HepG2 (cell line): ENCODE measurements at regions of chr14 and their contacts with region 1.

Region 1: DNA sequence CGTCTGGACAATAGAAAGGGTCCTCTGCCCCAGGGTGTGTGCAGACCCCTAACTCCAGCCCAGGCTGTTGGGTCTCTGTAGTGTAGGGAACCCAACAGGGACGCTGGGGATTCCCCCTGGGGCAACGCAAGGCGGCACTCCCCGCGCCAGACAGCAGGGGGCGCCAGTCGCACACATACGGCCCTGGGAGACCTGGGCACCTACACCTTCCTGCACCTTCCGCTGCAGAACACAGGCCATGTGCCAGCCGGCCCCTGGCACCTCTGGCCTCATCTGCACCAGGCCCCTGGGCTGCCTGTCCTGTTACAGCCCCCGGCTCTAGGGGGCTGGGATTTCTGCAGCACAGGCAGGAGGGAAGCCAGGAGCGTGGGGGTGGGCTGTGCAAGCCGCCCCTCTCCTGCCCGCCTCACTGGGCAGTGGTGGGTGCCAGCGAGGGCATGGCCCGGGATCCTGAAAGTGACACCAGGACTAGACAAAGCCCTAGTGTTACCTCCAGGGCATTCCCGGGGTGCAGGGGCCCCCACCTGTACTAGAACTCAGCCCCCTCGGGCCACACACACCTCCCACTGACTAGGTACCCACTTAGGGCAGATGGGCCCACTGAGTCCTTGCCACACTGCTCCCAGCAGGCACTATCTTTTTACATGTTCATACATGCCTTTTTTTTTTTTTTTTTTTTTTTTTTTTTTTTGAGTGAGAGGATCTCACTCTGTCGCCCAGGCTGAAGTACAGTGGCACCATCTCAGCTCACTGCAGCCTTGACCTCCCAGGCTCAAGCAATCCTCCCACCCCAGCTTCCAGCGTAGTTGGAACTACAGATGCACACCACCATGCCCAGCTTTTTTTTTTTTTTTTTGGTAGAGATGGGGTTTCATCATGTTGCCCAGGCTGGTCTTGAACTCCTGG is 37.5 kb downstream of the CCNK start:
- DNase-seq: peak; percentile 40
- ATAC-seq: peak; percentile 61
- H3K4me3 ChIP-seq: no peak overlapping the region
- H3K27ac ChIP-seq: no peak overlapping the region
- H3K4me1 ChIP-seq: peaks cover 15% of the 10 kb centered on the region
- H3K27me3 ChIP-seq: no peaks in the 10 kb centered on the region
- CTCF ChIP-seq: peak; percentile 98
- EP300 ChIP-seq: no peak
- POLR2A ChIP-seq: no peak
- RAD21 ChIP-seq: peak; percentile 97

Region 2: DNA sequence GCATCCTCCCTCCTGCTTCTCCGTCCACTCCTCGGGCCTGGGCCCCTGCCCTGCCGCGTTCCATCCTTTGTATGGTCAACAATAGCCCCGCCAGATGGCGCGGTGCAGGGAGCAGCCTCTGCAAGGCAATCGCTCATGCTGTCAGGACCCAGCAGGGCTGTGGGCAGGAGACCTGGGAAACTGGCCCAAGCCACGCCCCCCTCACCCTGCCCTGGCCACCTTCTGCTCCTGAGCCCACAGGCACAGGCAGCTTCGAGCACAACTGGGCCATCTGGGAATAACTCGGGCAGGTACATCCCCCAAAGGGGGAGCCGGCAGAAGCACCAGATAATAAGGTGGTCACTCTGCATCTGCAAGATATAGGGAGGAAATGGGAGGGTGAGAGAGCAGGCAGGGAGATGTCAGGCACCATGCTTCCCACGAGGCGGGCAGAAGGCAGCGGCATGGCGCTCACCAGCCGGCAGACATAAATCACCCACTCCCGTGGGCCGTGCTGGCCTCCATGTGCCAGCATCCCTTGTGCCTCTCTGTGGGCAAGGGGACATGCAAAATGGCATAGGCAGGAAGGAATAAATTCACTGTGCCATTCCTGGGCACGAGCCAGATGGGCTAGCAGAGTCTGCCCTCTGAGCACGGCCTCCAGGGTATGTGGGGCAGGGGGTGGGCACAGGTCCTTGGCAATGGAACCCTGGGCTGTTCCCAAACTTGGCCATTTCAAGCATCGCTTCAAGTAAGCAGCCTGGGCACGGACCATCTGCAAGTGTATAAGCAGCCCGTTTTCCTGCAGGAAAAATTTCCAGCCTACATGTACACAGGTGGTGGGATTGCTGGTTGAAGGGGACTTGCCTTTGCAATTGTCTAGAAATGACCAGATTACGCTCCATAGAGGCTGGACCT is 44.8 kb after region 1 on chr14:
- CTCF ChIA-PET with region 1: no interaction called
- POLR2A ChIA-PET with region 1: no interaction called
- in situ Hi-C with region 1: no loop called
- intact Hi-C with region 1: loop called (anchors 2 kb)
- DNase-seq: peak; percentile 84
- ATAC-seq: peak; percentile 82
- H3K4me3 ChIP-seq: no peak overlapping the region
- H3K27ac ChIP-seq: peak overlapping the region; percentile 91
- H3K4me1 ChIP-seq: peaks cover 92% of the 10 kb centered on the region
- H3K27me3 ChIP-seq: no peaks in the 10 kb centered on the region
- CTCF ChIP-seq: peak; percentile 94
- EP300 ChIP-seq: no peak
- POLR2A ChIP-seq: no peak
- RAD21 ChIP-seq: peak; percentile 96

Region 3: DNA sequence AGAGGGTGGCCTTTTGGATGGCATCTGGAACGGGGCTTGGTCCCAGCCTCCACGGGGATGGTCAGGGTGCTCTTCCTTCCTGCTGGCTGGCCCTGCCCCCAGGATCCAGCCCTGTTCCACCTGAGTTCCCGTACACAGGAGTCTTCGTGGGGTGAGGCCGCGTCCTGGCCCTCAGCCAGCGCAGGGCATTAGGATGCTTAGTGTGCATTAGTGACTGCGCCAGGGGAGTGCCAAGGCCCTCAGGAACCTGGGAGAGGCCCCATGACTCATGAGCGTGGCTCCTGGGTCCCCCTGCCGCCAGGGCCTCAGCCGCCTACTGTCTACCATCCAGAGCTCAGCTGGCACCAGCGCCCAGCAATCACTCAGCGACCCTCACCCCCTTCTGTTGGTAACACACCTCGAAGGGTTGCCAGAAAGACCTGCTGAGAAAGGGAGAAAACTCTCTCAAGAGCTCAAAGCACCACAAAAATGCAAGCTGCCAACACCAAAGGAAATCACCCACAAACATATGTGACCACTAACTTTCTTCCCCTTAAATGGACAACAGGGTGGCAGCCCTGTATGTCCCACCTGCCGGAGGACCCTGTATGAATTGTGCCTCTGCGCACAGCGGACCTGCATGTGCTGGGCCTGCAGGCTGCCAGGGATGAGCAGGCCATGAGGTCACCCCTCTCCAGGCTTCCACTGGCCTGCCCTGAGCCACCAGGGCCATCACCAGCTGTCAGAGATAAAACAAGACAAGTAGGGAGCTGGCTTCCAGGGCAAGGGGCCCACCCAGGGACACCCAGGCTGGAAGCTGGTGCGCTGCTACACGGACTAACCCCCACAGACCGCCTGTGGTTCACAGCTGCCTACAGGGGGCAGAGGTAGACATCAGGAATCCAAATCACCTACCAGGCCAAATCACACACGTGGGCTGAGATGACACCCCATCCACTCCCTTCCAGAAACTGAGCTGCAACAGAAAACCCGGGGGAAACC is 56.6 kb after region 1 on chr14:
- CTCF ChIA-PET with region 1: no interaction called
- POLR2A ChIA-PET with region 1: no interaction called
- in situ Hi-C with region 1: no loop called
- intact Hi-C with region 1: loop called (anchors 2 kb)
- DNase-seq: peak; percentile 52
- ATAC-seq: peak; percentile 58
- H3K4me3 ChIP-seq: peak overlapping the region in 1 of 3 experiments; percentile 44; a peak in 1 of 6 replicates
- H3K27ac ChIP-seq: peak overlapping the region; percentile 64
- H3K4me1 ChIP-seq: peaks cover 73% of the 10 kb centered on the region
- H3K27me3 ChIP-seq: no peaks in the 10 kb centered on the region; a peak in 1 of 5 replicates
- CTCF ChIP-seq: peak; percentile 61
- EP300 ChIP-seq: no peak
- POLR2A ChIP-seq: no peak
- RAD21 ChIP-seq: 0 out of 2 replicates have a peak, but pooled peaks have one; percentile 25

Region 4: GRCh38 chr14:99628832-99629618 is 110.3 kb after region 1 on chr14:
- CTCF ChIA-PET with region 1: interaction called, 29 read pairs
- POLR2A ChIA-PET with region 1: no interaction called
- in situ Hi-C with region 1: loop called (anchors 5 kb)
- intact Hi-C with region 1: loop called (anchors 1 kb)
- DNase-seq: peak; percentile 18
- ATAC-seq: peak; percentile 89
- H3K4me3 ChIP-seq: no peak overlapping the region
- H3K27ac ChIP-seq: no peak overlapping the region
- H3K4me1 ChIP-seq: peaks cover 5% of the 10 kb centered on the region; the same call in 1 of the 2 replicates
- H3K27me3 ChIP-seq: peaks cover 9 to 37% of the 10 kb centered on the region in 2 experiments; a peak in 4 of 5 replicates
- CTCF ChIP-seq: peak; percentile 98
- EP300 ChIP-seq: no peak
- POLR2A ChIP-seq: no peak
- RAD21 ChIP-seq: peak; percentile 98